Common myeloid progenitor, CD34-positive (primary cell): ENCODE measurements at regions of chr1 and their contacts with region 1.

Region 1: DNA sequence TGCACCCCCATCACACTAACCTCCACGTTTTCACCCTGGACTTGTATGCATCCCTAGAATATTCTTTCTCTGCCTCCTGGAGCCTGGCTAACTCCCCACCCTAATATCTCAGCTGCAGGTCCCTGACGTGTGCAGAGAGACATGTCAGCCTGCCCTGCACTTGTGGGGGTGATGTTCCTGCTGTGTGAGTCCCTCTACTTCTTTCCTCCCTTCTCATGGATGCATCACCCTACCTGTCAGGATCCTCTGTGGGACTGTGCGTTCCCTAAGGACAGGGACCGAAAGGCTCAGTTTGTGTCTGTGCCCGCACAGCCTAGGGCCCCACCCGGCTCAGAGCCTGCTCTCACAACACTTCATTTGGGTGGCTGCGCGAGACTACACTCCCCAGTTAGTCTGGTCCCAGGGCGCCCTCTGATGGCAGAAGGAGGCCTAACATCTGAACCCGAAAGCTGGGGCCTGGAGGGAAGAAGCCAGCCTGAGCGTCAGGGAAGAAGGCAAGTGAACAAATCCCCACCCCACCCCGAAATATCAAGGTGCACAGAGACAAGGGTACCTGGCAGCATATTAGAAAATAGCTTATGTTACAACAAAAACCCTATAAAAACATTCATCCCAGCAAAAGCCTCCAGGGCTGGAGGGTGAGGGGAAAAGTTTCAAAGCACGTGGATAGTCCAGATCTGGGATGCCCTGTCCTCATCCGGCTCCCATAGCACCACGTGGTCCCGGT is 3.7 kb downstream of the CD52 start:
- DNase-seq: peak; percentile 87 to 92 (median 88)
- H3K4me3 ChIP-seq: peak overlapping the region in 1 of 7 experiments; percentile 11
- H3K27ac ChIP-seq: peak overlapping the region in 1 of 2 experiments; percentile 9
- H3K4me1 ChIP-seq: peaks cover 6 to 52% (median 47%) of the 10 kb centered on the region in 4 experiments
- H3K27me3 ChIP-seq: no peaks in the 10 kb centered on the region

Region 2: GRCh38 chr1:26306290-26307229 is 14.9 kb before region 1 on chr1 and contains the start of gene UBXN11:
- CTCF ChIA-PET with region 1: interaction called, 27 read pairs
- POLR2A ChIA-PET with region 1: no interaction called
- DNase-seq: peak; percentile 94 to 97 (median 96)
- H3K4me3 ChIP-seq: peak within 1 kb of the TSS; percentile 69 to 98 (median 90)
- H3K27ac ChIP-seq: peak within 1 kb of the TSS; percentile 75 to 91
- H3K4me1 ChIP-seq: peaks cover 14 to 33% (median 26%) of the 10 kb centered on the region in 4 experiments
- H3K27me3 ChIP-seq: no peaks in the 10 kb centered on the region

Region 3: DNA sequence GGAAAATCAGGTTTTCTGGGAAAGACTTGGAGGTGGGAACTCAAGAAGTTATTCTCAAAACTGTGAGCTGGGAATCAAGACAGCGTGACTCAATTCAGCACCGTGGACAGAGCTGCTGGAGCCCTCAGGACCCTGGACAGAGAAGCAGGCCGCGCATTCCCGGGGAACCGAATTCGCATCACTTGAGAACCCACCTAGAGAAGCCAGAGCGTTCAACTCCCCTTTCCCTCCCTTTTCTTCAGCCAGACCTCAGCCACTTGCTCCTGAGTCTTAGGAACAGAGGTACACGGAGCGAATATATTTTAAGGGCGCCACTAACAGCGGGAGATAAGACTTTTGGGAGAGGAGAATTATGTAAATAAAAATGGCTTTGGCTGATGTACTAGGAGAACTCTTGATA is 87.1 kb after region 1 on chr1:
- CTCF ChIA-PET with region 1: no interaction called
- POLR2A ChIA-PET with region 1: no interaction called
- DNase-seq: peak; percentile 64 to 84 (median 78)
- H3K4me3 ChIP-seq: no peak overlapping the region
- H3K27ac ChIP-seq: no peak overlapping the region
- H3K4me1 ChIP-seq: peaks cover 0 to 14% (median 13%) of the 10 kb centered on the region in 4 experiments
- H3K27me3 ChIP-seq: peaks cover 3 to 67% (median 36%) of the 10 kb centered on the region in 5 experiments